Cardiac septum (tissue), 1 donor: ENCODE measurements at regions of chr4 and their contacts with region 1.

Region 1: DNA sequence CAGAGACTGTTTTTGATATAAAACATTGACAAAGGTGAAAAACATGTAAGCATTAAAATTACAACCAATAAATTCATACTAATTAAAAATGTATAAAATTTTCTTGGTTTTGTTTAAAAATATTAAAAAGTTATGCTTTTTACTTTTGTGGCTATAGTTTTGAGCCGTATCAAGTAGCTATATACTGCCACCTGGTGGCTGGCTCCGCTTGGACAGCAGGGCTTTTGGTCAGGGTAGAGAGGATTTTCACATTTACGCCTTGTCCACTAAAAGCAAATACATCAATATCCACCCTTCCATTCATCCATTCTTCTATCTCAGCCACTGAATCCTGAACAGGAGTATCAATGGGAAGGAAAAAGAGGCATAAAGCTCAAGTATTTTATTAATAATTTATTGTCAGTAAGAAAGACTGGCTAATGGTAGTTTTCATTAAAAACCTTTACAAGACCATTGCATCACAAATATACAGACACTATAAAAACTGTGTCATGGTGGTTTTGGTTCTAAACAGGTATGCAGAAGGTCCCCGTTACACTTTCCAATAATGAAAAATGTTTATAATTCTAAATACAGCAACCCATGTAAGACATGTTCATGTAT is 32.1 kb upstream of the MTNR1A start:
- DNase-seq: no peak

Region 2: DNA sequence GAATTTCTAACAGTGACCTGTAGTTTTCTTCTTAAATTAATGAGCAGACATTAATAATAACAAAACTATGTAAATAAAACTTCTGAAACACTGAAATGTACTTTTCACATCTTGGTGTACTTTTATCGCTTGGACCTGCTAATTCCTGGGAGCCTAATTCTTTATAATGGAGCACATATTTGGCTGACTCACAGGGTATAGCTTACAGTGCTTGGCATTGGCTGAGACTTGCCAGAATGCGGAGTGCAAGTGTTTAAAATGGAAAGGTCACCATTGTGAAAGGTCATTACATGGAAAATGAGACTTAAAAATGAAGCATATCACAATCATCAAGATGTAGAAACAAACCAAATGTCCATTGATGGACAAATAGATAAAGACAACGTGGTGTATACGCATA is 914.9 kb before region 1 on chr4:
- intact Hi-C with region 1: no loop called
- DNase-seq: no peak

Region 3: DNA sequence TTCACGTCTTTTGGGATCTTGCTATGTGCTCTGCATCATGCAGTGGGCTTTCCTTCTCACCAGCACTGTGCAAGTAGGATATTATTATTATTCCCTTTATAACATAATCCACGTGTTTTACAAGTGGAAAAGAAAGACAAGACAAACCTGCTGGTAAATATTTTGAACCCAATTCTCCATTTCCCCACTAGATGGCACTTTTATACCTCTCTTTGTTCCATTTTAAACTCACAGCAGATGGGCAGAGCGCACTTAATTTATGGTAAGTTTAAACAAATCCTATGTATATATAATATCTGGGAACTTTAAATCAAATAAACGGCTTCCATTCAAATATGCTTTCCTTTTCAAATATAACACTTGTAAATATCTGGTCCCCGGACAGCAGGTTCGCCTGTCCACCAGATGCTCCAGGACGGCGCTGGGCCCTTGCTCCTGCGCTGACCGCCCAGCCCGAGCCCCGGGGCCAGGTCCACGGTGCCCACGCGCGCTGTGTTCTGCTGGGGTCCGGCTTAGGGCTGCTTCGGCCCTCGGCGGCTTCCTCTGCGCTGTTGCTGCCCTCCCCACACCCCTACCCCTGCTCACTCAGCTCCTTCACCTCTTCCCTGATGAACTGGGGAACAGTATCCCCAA is 290.4 kb before region 1 on chr4:
- intact Hi-C with region 1: loop called (anchors 2 kb)
- DNase-seq: no peak

Region 4: GRCh38 chr4:186472948-186473347 is 114.6 kb before region 1 on chr4:
- intact Hi-C with region 1: loop called (anchors 2 kb)
- DNase-seq: no peak

Region 5: DNA sequence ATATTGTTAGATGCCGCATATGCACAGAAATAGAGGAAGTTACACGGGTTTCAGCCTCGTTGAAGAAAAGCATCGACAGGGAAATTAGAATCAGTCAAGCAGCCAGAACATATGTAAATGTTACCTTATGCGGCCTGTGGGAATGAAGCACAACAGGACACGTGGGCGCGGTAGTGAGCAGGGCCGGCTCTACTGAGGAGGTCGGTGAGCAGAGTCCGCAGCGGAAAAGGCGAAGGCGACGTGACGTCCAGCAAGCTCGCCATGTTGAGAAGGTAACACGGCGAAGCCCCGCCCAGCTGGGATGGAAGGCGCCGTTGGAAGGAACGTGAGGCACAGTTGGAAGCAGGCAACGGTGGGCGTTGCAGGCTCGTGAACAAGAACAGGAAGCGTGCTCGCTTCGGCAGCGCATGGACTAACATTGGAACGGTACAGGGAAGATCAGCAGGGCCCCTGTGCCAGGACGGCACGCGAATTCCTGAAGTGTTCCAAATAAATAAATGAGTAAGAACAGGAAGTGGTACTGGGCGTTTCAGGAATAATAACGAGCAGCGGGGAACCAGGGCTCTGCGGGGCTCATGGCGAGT is 86.7 kb before region 1 on chr4:
- intact Hi-C with region 1: no loop called
- DNase-seq: no peak

Region 6: DNA sequence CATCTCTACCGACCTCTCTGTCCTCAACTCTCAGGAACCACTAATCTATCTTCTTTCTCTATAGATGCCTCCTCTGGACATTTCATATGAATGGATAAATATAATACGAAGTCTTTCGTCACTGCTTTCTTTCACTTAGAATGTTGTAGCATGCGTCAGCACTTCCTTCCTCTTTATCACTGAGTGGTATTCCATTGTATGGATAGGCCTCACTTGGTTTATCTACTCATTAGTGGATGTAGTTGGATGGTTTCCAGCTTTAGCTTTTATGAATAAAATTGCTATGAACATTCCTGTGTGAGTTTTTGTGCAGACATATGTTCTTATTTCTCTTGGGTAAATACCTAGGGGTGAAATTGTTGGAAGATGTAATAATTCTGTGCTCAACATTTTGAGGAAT is 664.4 kb after region 1 on chr4:
- intact Hi-C with region 1: no loop called
- DNase-seq: no peak